Breast epithelium (tissue), 4 donors: ENCODE measurements at regions of chr20 and their contacts with region 1.

Region 1: DNA sequence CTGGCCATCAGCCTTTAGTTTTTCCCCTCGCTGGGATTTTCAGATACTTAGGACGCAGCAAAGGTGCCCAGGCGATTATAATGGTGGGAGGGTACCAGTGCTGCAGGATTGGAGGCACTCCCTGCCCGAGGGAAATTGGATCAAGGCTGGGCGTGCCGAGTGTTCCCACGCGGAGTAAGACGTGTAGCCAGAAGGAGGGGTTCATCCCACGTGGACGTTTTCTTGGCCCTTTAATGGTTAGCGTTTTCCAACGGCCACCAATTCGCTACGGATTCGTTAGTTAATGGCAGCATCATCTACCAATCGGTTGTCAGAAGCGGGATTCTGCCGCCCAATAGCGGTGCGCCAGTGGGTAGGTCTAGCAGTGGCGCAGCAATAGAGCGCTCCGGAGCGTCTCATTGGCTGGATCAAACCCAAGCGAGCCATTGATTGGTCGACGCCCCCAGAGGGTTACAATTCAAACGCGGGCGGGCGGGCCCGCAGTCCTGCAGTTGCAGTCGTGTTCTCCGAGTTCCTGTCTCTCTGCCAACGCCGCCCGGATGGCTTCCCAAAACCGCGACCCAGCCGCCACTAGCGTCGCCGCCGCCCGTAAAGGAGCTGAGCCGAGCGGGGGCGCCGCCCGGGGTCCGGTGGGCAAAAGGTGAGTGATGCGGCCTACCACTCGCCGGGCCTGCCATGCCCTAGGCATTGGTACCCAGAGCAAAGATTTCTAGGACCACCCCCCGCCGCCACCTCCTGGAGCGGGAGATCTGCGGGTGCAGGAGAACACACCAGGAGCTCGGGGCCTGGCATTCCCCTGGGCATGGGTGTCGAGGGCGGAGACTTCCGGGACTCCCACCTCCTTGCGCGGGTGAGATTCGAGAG is at the start of gene UBE2C:
- DNase-seq: peak; percentile 97 to 99
- H3K4me3 ChIP-seq: peak within 1 kb of the TSS; percentile 46 to 77 (median 65)
- H3K27ac ChIP-seq: peak within 1 kb of the TSS; percentile 32 to 50
- H3K4me1 ChIP-seq: peaks cover 0 to 4% of the 10 kb centered on the region in 2 donors
- H3K27me3 ChIP-seq: no peaks in the 10 kb centered on the region
- CTCF ChIP-seq: no peak
- POLR2A ChIP-seq: no peak
- total RNA-seq, gene UBE2C: 0.98 to 5.9 (median 1.2) TPM

Region 2: DNA sequence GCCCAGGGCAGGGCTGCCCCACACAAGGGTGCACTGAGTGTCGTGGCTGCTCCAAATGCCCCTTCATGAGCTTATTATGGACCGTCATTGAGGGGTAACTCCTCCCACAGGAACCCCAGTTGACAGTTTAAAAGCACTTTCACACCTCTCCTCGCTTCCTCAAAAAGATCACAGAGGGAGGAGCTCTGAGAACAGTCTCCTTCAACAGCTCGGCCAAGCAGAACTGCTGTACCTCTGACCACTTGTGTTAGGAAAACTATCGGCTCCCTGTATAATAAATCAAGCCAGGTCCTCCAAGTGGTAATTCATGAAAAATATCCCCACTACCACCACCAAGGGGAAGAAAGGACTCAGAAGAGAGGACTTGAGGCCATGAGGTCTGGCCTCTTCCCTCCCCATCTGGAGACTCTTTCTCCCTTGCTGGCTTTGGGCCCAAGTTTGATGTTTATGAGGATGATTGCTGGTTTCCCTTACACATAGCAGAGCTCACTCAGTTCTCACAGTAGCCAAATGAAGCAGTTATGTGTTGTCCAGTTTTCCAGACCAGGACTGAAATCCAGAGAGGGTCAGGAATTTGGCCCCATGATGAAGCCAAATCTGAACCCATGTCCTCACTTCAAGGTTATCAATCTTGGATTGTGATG is 29.9 kb after region 1 on chr20:
- intact Hi-C with region 1: no loop called
- DNase-seq: no peak
- H3K4me3 ChIP-seq: no peak overlapping the region
- H3K27ac ChIP-seq: peak overlapping the region; percentile 6 to 63
- H3K4me1 ChIP-seq: no peaks in the 10 kb centered on the region
- H3K27me3 ChIP-seq: no peaks in the 10 kb centered on the region
- CTCF ChIP-seq: no peak
- POLR2A ChIP-seq: no peak

Region 3: DNA sequence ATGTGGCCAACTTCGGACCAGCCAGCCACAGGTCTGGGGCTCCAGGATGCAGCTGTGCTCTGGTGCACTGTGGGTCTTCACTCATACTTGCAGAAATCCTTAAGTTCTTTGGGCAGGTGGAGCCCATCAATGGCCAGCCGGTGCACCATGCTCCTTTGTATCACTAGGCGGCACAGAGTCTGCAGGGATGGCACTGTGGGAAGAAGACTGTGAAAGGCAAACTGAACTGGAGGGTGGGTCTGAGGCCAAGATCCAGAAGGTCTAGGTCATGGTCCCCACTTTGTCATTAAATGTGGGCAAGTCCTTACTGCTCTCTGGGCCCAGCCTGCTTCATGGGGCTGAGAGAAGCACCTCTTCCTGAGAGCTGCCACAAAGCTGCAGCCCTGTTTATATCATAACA is 76.3 kb after region 1 on chr20:
- intact Hi-C with region 1: loop called (anchors 2 kb)
- DNase-seq: no peak
- H3K4me3 ChIP-seq: no peak overlapping the region
- H3K27ac ChIP-seq: no peak overlapping the region
- H3K4me1 ChIP-seq: peaks cover 4 to 11% of the 10 kb centered on the region in 2 donors
- H3K27me3 ChIP-seq: no peaks in the 10 kb centered on the region
- CTCF ChIP-seq: no peak
- POLR2A ChIP-seq: no peak